ENCODE measurements at regions of chr17 and their contacts with region 1.

Region 1: GRCh38 chr17:68375566-68375965 is 81.7 kb downstream of the WIPI1 start:
- DNase-seq: no peak
- H3K4me3 ChIP-seq: no peak overlapping the region
- H3K27ac ChIP-seq: no peak overlapping the region
- H3K4me1 ChIP-seq: no peaks in the 10 kb centered on the region
- CTCF ChIP-seq: no peak

Region 2: DNA sequence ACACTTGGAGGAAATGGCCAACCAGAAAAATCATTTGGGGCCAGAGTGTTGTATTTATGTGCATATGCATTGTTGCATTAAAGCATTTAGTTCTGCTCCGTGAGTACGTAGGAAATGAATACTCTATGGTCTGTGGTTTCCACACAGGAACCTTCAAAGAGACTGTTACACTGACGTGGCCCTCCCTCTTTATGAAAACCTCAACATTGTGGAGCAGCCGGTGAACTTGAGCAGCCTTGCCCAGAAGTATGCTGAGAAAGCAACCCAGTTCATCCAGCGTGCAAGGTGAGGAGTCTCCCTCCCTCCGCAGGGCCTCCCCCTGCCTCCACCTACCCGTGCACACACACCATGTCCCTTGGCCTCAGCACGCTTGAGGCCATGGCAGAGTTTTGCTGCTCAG is 19.0 kb before region 1 on chr17:
- CTCF ChIA-PET with region 1: interaction called, 3 read pairs
- POLR2A ChIA-PET with region 1: interaction called, 11 read pairs
- intact Hi-C with region 1: no loop called
- DNase-seq: no peak
- H3K4me3 ChIP-seq: no peak overlapping the region
- H3K27ac ChIP-seq: no peak overlapping the region
- H3K4me1 ChIP-seq: peaks cover 5% of the 10 kb centered on the region
- CTCF ChIP-seq: no peak

Measured in OCI-LY7 (cell line).